Naive thymus-derived CD4-positive, alpha-beta T cell (primary cell): ENCODE measurements at regions of chr6 and their contacts with region 1.

Region 1: DNA sequence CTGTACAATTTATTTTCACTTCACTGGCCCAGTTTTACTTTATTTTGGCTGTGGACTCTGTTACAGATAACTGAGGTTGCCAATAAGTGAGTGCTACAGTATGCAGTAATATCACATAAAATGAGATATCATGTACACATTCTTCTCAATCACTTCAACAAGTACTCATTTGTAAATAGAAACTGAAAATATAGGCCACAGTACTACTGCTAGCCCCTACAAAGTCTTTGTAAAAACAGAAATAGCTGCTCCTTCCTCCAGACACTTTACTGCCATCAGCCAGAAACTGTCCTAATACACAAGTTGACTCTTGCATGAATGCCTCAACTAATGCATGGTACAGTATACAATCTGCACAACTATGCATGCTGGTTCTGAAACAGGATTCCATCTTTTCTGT is 9.2 kb downstream of the DTNBP1 start:
- DNase-seq: no peak
- ATAC-seq: no peak
- H3K4me3 ChIP-seq: no peak overlapping the region
- H3K4me3 Mint-ChIP-seq: no peak overlapping the region
- H3K27ac ChIP-seq: no peak overlapping the region
- H3K27ac Mint-ChIP-seq: peak overlapping the region in 1 of 9 donors; percentile 25
- H3K4me1 ChIP-seq: peaks cover 0 to 5% of the 10 kb centered on the region in 2 donors
- H3K4me1 Mint-ChIP-seq: peaks cover 20 to 51% (median 43%) of the 10 kb centered on the region in 7 donors
- H3K27me3 ChIP-seq: no peaks in the 10 kb centered on the region
- H3K27me3 Mint-ChIP-seq: no peaks in the 10 kb centered on the region

Region 2: DNA sequence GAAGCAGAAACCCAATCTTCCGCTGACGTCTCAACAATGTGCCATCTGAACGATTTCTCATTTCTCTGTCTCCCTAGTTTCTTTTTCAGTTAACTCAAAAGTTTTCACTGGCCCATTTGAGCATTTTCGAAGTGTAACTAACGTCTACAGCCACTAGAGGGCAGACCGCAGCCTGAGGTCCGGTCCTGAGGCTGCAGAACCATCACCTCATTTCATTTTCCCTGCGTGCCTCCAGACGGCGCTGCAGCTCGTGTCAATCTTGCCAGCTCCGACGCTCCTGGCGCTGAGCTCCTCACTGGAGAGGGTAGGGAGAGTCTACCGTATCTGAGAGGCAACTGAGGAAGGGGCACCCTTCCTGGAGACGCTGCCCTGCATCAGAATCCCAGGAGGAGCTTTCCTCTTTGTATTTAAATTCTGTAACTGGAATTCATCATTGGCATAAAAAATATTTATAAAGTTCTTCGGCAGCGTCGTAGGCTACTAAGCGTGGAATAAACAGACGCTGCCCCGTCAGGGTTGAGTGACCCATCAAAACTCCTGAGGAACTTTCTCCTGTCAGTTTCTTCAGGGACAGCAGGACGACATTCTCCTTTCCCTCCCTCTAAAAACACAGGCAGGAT is 37.8 kb after region 1 on chr6:
- CTCF ChIA-PET with region 1: no interaction called
- POLR2A ChIA-PET with region 1: no interaction called
- intact Hi-C with region 1: no loop called
- DNase-seq: peak; percentile 56 to 84 (median 76)
- ATAC-seq: peak; percentile 100
- H3K4me3 ChIP-seq: no peak overlapping the region
- H3K4me3 Mint-ChIP-seq: peak overlapping the region in 2 of 10 donors; percentile 25 to 56
- H3K27ac ChIP-seq: no peak overlapping the region
- H3K27ac Mint-ChIP-seq: peak overlapping the region in 3 of 9 donors; percentile 1 to 23 (median 4)
- H3K4me1 ChIP-seq: no peaks in the 10 kb centered on the region
- H3K4me1 Mint-ChIP-seq: peaks cover 4 to 9% (median 7%) of the 10 kb centered on the region in 7 donors
- H3K27me3 ChIP-seq: no peaks in the 10 kb centered on the region
- H3K27me3 Mint-ChIP-seq: peaks cover 0 to 5% (median 0%) of the 10 kb centered on the region in 5 donors

Region 3: GRCh38 chr6:15763837-15764236 is 110.3 kb after region 1 on chr6:
- CTCF ChIA-PET with region 1: no interaction called
- POLR2A ChIA-PET with region 1: no interaction called
- intact Hi-C with region 1: no loop called
- DNase-seq: no peak
- ATAC-seq: no peak
- H3K4me3 ChIP-seq: no peak overlapping the region
- H3K4me3 Mint-ChIP-seq: no peak overlapping the region
- H3K27ac ChIP-seq: no peak overlapping the region
- H3K27ac Mint-ChIP-seq: no peak overlapping the region
- H3K4me1 ChIP-seq: no peaks in the 10 kb centered on the region
- H3K4me1 Mint-ChIP-seq: no peaks in the 10 kb centered on the region
- H3K27me3 ChIP-seq: no peaks in the 10 kb centered on the region
- H3K27me3 Mint-ChIP-seq: peaks cover 0 to 7% (median 6%) of the 10 kb centered on the region in 5 donors

Region 4: GRCh38 chr6:16523606-16524379 is 870.2 kb after region 1 on chr6:
- CTCF ChIA-PET with region 1: no interaction called
- POLR2A ChIA-PET with region 1: no interaction called
- intact Hi-C with region 1: loop called in 1 of 2 experiments (anchors 5 kb)
- DNase-seq: no peak
- ATAC-seq: no peak
- H3K4me3 ChIP-seq: no peak overlapping the region
- H3K4me3 Mint-ChIP-seq: no peak overlapping the region
- H3K27ac ChIP-seq: no peak overlapping the region
- H3K27ac Mint-ChIP-seq: peak overlapping the region in 3 of 9 donors; percentile 14 to 76 (median 66)
- H3K4me1 ChIP-seq: no peaks in the 10 kb centered on the region
- H3K4me1 Mint-ChIP-seq: peaks cover 0 to 32% (median 2%) of the 10 kb centered on the region in 7 donors
- H3K27me3 ChIP-seq: no peaks in the 10 kb centered on the region
- H3K27me3 Mint-ChIP-seq: no peaks in the 10 kb centered on the region